Activated B cell treated with CpG ODN at 0.5 μM for 24 hours (primary cell): ENCODE measurements at regions of chr5 and their contacts with region 1.

Region 1: DNA sequence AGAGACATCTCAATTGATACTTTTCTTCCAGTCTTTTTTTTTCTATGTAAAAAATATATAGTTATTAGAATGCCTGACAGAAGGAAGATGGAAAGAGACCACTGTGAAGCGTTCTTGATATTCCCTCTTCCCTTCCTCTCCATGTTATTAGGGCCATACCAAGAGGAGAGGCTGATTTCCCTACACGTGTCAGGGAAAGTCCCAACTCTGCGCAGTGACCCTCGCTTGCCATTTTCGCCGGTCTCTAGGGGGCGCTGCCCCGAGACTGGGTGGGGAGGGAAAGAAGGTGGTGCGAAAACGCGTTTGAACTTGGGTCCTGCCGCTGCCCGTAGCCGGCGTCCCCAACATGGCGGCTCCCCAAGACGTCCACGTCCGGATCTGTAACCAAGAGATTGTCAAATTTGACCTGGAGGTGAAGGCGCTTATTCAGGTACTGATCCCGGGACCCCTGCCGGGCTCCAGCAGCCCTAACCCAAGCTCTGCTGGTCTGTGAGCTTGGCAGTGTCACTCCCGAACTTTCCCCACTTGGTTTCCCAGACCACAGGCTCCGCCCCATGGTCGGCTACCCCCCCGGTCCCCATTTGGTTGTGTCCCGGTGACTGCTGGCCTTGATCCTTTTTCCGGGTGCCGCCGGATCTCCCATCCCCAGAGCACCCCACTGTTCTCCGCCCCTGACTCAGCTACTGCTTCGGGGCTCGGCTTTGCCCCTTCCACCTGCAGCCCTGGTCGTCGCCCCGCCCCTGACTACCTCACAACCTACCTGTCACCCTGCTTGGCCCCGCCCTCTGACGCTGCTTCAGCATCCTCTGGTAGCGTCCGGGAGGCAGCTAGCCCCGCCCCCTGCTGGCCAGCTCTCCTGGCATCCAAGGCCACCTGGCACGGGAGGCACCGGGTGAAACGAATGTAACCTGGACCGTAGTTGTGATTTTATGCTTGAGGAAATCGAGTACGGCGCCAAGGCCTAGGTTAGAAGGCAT is at the start of gene BNIP1:
- DNase-seq: peak; percentile 97
- ATAC-seq: peak; percentile 90
- H3K4me3 Mint-ChIP-seq: peak within 1 kb of the TSS; percentile 99
- H3K27ac Mint-ChIP-seq: peak within 1 kb of the TSS; percentile 97
- H3K4me1 Mint-ChIP-seq: peaks cover 12% of the 10 kb centered on the region
- H3K27me3 Mint-ChIP-seq: no peaks in the 10 kb centered on the region
- CTCF ChIP-seq: peak; percentile 54
- total RNA-seq, gene BNIP1: 17.9 and 20.2 TPM in 2 replicates

Region 2: GRCh38 chr5:172777881-172778814 is 366.3 kb before region 1 on chr5:
- CTCF ChIA-PET with region 1: no interaction called
- POLR2A ChIA-PET with region 1: interaction called, 10 read pairs
- intact Hi-C with region 1: no loop called
- DNase-seq: no peak
- ATAC-seq: peak; percentile 6
- H3K4me3 Mint-ChIP-seq: peak overlapping the region; percentile 63
- H3K27ac Mint-ChIP-seq: peak overlapping the region; percentile 97
- H3K4me1 Mint-ChIP-seq: peaks cover 39% of the 10 kb centered on the region
- H3K27me3 Mint-ChIP-seq: no peaks in the 10 kb centered on the region
- CTCF ChIP-seq: no peak

Region 3: GRCh38 chr5:172958331-172959046 is 186.0 kb before region 1 on chr5:
- CTCF ChIA-PET with region 1: no interaction called
- POLR2A ChIA-PET with region 1: interaction called, 12 read pairs
- intact Hi-C with region 1: loop called (anchors 1 kb)
- DNase-seq: peak; percentile 64
- ATAC-seq: peak; percentile 76
- H3K4me3 Mint-ChIP-seq: peak overlapping the region; percentile 97
- H3K27ac Mint-ChIP-seq: peak overlapping the region; percentile 94
- H3K4me1 Mint-ChIP-seq: peaks cover 31% of the 10 kb centered on the region
- H3K27me3 Mint-ChIP-seq: no peaks in the 10 kb centered on the region
- CTCF ChIP-seq: no peak

Region 4: GRCh38 chr5:173035904-173036707 is 108.4 kb before region 1 on chr5:
- CTCF ChIA-PET with region 1: interaction called, 3 read pairs
- POLR2A ChIA-PET with region 1: interaction called, 3 read pairs
- intact Hi-C with region 1: loop called (anchors 1 kb)
- DNase-seq: peak; percentile 17
- ATAC-seq: peak; percentile 59
- H3K4me3 Mint-ChIP-seq: peak overlapping the region; percentile 82
- H3K27ac Mint-ChIP-seq: peak overlapping the region; percentile 91
- H3K4me1 Mint-ChIP-seq: peaks cover 57% of the 10 kb centered on the region
- H3K27me3 Mint-ChIP-seq: no peaks in the 10 kb centered on the region
- CTCF ChIP-seq: no peak

Region 5: GRCh38 chr5:173391031-173391430 is 246.5 kb after region 1 on chr5:
- CTCF ChIA-PET with region 1: no interaction called
- POLR2A ChIA-PET with region 1: no interaction called
- intact Hi-C with region 1: no loop called
- DNase-seq: no peak
- ATAC-seq: no peak
- H3K4me3 Mint-ChIP-seq: no peak overlapping the region
- H3K27ac Mint-ChIP-seq: no peak overlapping the region
- H3K4me1 Mint-ChIP-seq: no peaks in the 10 kb centered on the region
- H3K27me3 Mint-ChIP-seq: peaks cover 15% of the 10 kb centered on the region
- CTCF ChIP-seq: no peak